ENCODE measurements at regions of chr14 and their contacts with region 1.

Region 1: DNA sequence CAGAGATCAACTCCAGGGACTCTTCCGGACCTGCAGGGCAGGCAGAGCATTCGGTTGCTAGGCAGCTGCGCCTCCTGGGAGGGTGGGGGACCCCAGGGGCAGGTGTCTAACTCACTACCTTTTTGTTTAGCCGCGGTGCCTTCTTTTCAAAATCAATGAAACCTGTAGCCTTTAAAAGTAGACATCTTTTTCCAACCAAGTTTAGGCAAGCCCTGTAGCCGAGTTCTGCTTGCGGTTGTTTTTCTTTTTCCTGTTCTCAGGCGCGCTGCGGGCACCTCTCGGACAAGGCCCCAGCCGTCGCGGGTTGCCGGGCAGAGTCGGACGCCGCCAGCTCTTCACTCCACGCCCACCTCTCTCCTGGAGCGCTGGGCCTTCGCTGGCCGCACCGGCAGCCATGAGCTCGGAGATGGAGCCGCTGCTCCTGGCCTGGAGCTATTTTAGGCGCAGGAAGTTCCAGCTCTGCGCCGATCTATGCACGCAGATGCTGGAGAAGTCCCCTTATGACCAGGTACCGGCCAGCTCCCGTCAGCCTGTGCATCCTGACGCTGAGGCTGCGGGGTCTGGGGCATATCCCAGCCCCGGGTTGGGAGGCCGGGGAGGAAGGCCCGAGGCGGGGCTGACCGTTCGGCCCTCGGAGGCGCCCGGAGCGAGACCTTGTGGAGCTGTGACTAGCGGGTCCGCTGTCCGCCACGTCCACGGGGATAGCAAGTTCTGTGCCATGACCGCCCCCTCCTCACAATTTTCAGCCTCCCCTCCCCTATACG is at the start of gene TTC8:
- DNase-seq: peak; percentile 92
- H3K4me3 ChIP-seq: peak within 1 kb of the TSS; percentile 22 to 82 (median 70)
- H3K27ac ChIP-seq: peak within 1 kb of the TSS; percentile 88
- H3K4me1 ChIP-seq: peaks cover 6% of the 10 kb centered on the region
- H3K27me3 ChIP-seq: peaks cover 3 to 8% of the 10 kb centered on the region in 2 experiments
- CTCF ChIP-seq: no peak
- POLR2A ChIP-seq: peak; percentile 96
- total RNA-seq, gene TTC8: 11.9 and 15.5 TPM in 2 replicates

Region 2: GRCh38 chr14:87992718-87993628 is 831.5 kb before region 1 on chr14 and contains the start of gene GALC:
- CTCF ChIA-PET with region 1: no interaction called
- POLR2A ChIA-PET with region 1: no interaction called
- dilution Hi-C with region 1: no loop called
- intact Hi-C with region 1: loop called (anchors 1 kb)
- DNase-seq: peak; percentile 94
- H3K4me3 ChIP-seq: peak within 1 kb of the TSS; percentile 73 to 82 (median 74)
- H3K27ac ChIP-seq: peak within 1 kb of the TSS; percentile 58
- H3K4me1 ChIP-seq: peaks cover 12% of the 10 kb centered on the region
- H3K27me3 ChIP-seq: no peaks in the 10 kb centered on the region
- CTCF ChIP-seq: no peak
- POLR2A ChIP-seq: peak; percentile 76
- total RNA-seq, gene GALC: 14.2 and 15.0 TPM in 2 replicates

Region 3: GRCh38 chr14:88792572-88793258 is 31.8 kb before region 1 on chr14 and contains the start of gene EML5:
- CTCF ChIA-PET with region 1: interaction called, 3 read pairs
- POLR2A ChIA-PET with region 1: interaction called, 3 read pairs
- dilution Hi-C with region 1: no loop called
- intact Hi-C with region 1: loop called (anchors 1 kb)
- DNase-seq: peak; percentile 76
- H3K4me3 ChIP-seq: peak within 1 kb of the TSS; percentile 7 to 38 (median 35)
- H3K27ac ChIP-seq: no peak within 1 kb of the TSS
- H3K4me1 ChIP-seq: peaks cover 7% of the 10 kb centered on the region
- H3K27me3 ChIP-seq: peaks cover 21 to 34% of the 10 kb centered on the region in 2 experiments
- CTCF ChIP-seq: peak in 1 of 2 donors; percentile 26
- POLR2A ChIP-seq: no peak
- total RNA-seq, gene EML5: 0.09 TPM in 1 of 2 replicates, not detected in the other

Region 4: GRCh38 chr14:88841741-88842140 is 17.2 kb after region 1 on chr14:
- CTCF ChIA-PET with region 1: interaction called, 27 read pairs
- POLR2A ChIA-PET with region 1: interaction called, 3 read pairs
- dilution Hi-C with region 1: no loop called
- intact Hi-C with region 1: no loop called
- DNase-seq: no peak
- H3K4me3 ChIP-seq: no peak overlapping the region
- H3K27ac ChIP-seq: no peak overlapping the region
- H3K4me1 ChIP-seq: no peaks in the 10 kb centered on the region
- H3K27me3 ChIP-seq: no peaks in the 10 kb centered on the region
- CTCF ChIP-seq: no peak
- POLR2A ChIP-seq: no peak

Region 5: DNA sequence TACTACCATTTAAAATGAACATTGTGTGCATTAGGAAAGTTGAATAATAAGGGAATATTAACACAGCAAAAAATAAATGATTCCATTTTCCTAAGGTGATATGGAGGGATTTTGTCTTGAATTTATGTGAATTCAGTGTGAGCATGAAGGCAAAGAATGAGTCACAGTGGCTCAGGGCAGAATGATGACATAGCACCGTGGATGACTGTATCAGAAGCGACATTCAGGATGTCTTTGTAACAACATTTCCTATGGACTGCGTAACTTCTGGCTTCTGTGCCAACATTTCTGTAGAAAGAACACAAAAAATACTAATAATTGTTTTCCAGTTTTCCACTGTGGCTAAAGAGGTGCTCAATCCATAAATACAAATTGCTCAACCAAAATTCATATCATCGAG is 54.5 kb after region 1 on chr14:
- CTCF ChIA-PET with region 1: interaction called, 3 read pairs
- POLR2A ChIA-PET with region 1: interaction called, 3 read pairs
- dilution Hi-C with region 1: no loop called
- intact Hi-C with region 1: loop called (anchors 1 kb)
- DNase-seq: peak; percentile 92
- H3K4me3 ChIP-seq: peak overlapping the region in 1 of 3 experiments; percentile 16
- H3K27ac ChIP-seq: peak overlapping the region; percentile 82
- H3K4me1 ChIP-seq: peaks cover 12% of the 10 kb centered on the region
- H3K27me3 ChIP-seq: no peaks in the 10 kb centered on the region
- CTCF ChIP-seq: no peak
- POLR2A ChIP-seq: no peak

Measured in endothelial cell of umbilical vein (primary cell).